Activated B cell treated with CpG ODN at 0.5 μM for 24 hours (primary cell): ENCODE measurements at regions of chr1 and their contacts with region 1.

Region 1: DNA sequence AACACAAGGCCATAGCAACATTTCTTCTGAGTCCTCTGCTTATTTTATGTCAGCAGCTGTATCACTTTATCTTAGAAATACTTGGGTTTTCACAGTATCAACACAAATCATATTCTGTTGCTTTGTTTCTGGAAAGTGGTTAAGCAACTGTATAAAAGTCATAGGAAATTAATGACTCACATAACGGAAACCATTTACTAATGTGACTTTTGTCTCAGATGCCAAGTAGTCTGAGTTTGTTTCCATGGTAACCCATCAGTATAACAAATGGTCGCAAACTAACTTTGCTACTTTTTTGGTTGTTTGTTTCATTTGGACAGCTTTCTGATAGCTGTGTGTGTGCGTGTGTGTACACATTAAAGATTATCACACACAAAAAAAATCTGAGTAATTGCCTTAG is 31.1 kb downstream of the EEIG2 start:
- DNase-seq: no peak
- ATAC-seq: peak; percentile 56
- H3K4me3 Mint-ChIP-seq: no peak overlapping the region
- H3K27ac Mint-ChIP-seq: no peak overlapping the region
- H3K4me1 Mint-ChIP-seq: peaks cover 31% of the 10 kb centered on the region
- H3K27me3 Mint-ChIP-seq: no peaks in the 10 kb centered on the region
- CTCF ChIP-seq: no peak

Region 2: DNA sequence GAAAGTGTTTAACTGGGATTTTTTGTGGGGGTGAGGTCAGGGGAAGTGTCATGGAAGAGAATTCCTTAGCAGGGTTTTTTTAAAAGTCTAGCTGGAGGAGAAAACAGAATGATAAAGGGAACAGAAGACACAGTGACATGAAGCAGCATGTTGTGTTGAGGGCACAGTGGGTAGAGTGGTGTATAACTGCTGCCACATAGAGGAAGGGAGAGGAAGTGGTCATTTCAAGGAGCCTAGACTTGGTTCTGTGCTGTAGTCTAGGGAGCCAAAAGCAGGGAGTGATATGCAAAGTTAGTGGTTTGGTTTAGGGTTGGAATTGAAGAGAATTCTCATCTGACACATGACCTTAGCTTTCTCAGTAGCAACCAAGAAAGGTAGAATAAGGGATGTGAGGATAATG is 20.8 kb before region 1 on chr1:
- CTCF ChIA-PET with region 1: interaction called, 3 read pairs
- POLR2A ChIA-PET with region 1: no interaction called
- intact Hi-C with region 1: loop called (anchors 2 kb)
- DNase-seq: no peak
- ATAC-seq: peak; percentile 97
- H3K4me3 Mint-ChIP-seq: no peak overlapping the region
- H3K27ac Mint-ChIP-seq: no peak overlapping the region
- H3K4me1 Mint-ChIP-seq: no peaks in the 10 kb centered on the region
- H3K27me3 Mint-ChIP-seq: no peaks in the 10 kb centered on the region
- CTCF ChIP-seq: no peak